ENCODE measurements at regions of chr2 and their contacts with region 1.

Region 1: DNA sequence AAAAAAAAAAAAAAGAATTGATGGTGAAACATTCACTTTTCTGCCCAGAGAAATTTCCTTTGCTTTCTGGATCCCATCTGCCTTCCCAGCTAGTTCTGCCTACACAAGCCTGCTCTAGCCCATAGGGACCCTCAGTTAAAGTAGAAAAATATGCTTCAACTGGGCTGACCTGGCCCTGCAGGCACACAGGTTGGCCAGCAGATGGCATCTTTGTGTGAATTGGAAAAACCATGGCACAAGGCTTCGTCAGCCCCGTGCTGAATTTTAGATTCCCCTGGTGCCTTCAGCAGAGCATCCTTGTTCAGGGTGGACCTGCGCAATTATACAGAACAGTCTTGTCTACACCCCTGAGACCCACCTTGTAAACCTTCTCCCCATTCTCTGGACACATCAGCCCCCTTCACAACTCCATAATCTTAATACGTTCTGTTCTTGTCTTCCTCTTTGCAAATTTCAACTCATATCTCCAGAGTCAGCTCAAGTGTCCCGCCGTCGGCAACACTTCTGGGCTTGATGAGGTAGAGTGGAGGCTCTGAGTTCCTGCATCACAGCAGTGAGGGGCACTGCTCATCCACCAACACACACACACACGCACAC is 114.5 kb downstream of the INSIG2 start:
- DNase-seq: peak; percentile 71
- ATAC-seq: peak; percentile 88
- H3K4me3 Mint-ChIP-seq: no peak overlapping the region
- H3K27ac Mint-ChIP-seq: no peak overlapping the region
- H3K4me1 Mint-ChIP-seq: peaks cover 7% of the 10 kb centered on the region
- H3K27me3 Mint-ChIP-seq: peaks cover 23% of the 10 kb centered on the region
- CTCF ChIP-seq: peak; percentile 78

Region 2: GRCh38 chr2:118186110-118186857 is 16.5 kb before region 1 on chr2:
- CTCF ChIA-PET with region 1: interaction called, 15 read pairs
- POLR2A ChIA-PET with region 1: interaction called, 3 read pairs
- intact Hi-C with region 1: no loop called
- DNase-seq: peak; percentile 91
- ATAC-seq: peak; percentile 88
- H3K4me3 Mint-ChIP-seq: peak overlapping the region; percentile 89
- H3K27ac Mint-ChIP-seq: peak overlapping the region; percentile 97
- H3K4me1 Mint-ChIP-seq: peaks cover 14% of the 10 kb centered on the region
- H3K27me3 Mint-ChIP-seq: no peaks in the 10 kb centered on the region
- CTCF ChIP-seq: no peak

Measured in activated CD8-positive, alpha-beta T cell treated with anti-CD3 and anti-CD28 coated beads for 36 hours (primary cell).